Gastrocnemius medialis (tissue), 4 donors: ENCODE measurements at regions of chr3 and their contacts with region 1.

Region 1: DNA sequence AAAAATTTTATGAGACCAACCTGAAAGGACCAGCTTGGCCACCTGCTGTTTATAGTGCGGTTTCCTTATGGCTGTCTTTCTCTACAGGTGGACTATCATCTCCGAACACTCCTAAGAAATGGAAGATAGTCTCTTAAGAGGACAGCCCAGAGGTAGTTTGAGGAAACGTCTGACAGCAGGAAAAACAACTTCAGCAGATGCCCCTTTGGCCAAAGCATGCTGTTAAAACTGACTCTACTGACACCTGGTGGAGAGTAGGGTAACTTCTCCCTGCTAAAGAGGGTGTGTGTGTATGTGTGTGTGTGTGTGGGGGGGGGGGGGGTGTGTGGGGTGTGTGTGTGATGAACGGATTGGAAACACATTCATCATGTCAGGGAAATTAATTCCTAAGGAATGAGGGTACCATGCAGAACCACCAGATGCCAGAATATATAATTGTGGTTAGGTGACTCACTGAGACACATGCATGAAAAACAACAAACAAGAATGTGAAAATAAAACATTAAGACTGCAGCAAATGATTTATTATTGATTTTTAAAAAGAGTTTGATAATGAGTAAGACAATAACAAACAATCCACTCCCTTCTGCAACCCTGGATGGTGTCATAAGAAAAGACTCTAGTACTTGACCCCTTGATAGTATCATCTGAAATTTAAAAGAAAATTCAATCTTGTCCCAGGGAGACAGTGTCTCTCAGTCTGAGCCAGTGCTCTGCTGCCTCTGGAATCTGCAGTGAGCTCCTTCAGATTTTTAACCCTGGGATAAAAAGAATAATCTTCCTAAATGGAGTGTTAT is 256.5 kb downstream of the THRB start:
- DNase-seq: peak in 1 of 2 donors; percentile 36
- ATAC-seq: peak; percentile 57 to 72
- H3K4me3 ChIP-seq: no peak overlapping the region
- H3K27ac ChIP-seq: peak overlapping the region; percentile 30 to 62 (median 49)
- H3K4me1 ChIP-seq: peaks cover 40 to 54% of the 10 kb centered on the region in 2 donors
- H3K27me3 ChIP-seq: no peaks in the 10 kb centered on the region
- CTCF ChIP-seq: peak; percentile 73 to 81 (median 78)
- POLR2A ChIP-seq: no peak

Region 2: DNA sequence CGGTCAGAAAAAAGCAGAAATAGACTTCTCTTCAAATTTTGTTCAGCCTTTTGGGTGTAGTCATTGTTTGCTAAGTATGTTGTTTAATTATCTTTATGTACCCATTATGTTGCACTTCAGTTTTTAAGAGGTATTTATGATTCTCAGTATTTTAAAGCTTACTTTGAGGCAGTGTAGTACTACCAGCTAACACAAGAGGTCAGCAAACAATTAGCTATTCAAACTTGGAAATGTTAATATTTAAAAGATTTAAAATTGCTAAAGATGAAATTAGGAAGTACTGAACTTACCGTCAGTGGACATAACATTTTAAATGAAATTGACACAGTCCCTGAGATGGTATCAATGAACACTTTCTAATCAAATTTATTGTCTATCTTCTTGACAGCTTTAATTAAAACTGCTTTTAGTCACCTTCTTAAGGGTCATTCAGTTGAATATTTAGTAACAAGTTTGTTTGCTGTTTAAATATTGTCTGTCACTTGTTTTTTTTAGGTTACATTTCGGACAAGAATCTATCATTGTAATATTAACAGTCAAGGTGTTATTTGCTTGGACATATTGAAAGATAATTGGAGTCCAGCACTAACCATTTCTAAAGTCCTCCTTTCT is 349.4 kb before region 1 on chr3:
- in situ Hi-C with region 1: loop called in 2 of 4 experiments (anchors 25 kb)
- intact Hi-C with region 1: loop called (anchors 2 kb)
- DNase-seq: no peak
- ATAC-seq: no peak
- H3K4me3 ChIP-seq: no peak overlapping the region
- H3K27ac ChIP-seq: peak overlapping the region; percentile 22 to 62 (median 40)
- H3K4me1 ChIP-seq: peaks cover 27 to 32% of the 10 kb centered on the region in 2 donors
- H3K27me3 ChIP-seq: no peaks in the 10 kb centered on the region
- CTCF ChIP-seq: peak; percentile 68 to 93 (median 81)
- POLR2A ChIP-seq: no peak

Region 3: DNA sequence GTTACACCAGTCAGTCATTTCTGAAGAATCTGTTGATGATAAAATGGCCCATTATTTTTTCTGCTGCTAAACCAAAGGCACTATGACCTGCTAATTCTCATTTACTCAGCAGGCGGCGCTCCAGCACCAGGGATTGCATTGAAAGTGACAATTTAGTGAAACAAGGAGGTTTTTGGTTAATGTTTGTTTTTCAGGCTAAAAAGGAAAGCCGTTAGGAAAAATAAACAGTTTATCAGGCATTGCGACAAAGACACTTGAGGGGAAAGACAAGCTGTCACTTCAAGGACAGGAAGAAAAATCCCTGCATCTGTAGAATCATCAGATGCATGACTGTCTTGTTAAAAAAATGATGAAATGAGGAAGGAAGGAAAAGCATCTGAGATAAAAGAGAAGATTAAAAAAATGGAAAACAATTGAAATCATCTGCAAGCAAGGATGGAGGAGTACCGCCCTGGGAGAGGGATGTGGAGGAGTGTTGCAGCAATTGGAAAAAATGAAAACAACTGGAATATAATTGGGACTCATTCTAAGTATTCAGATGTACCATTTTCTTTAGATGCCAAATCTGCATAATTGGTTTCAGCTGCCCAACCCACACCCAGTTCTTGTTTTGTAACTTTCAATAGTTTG is 239.0 kb before region 1 on chr3:
- in situ Hi-C with region 1: loop called (anchors 10 kb)
- intact Hi-C with region 1: loop called (anchors 1 kb)
- DNase-seq: peak; percentile 23 to 37
- ATAC-seq: no peak
- H3K4me3 ChIP-seq: no peak overlapping the region
- H3K27ac ChIP-seq: no peak overlapping the region
- H3K4me1 ChIP-seq: peaks cover 0 to 9% of the 10 kb centered on the region in 2 donors
- H3K27me3 ChIP-seq: no peaks in the 10 kb centered on the region
- CTCF ChIP-seq: peak; percentile 82 to 97 (median 84)
- POLR2A ChIP-seq: no peak

Region 4: DNA sequence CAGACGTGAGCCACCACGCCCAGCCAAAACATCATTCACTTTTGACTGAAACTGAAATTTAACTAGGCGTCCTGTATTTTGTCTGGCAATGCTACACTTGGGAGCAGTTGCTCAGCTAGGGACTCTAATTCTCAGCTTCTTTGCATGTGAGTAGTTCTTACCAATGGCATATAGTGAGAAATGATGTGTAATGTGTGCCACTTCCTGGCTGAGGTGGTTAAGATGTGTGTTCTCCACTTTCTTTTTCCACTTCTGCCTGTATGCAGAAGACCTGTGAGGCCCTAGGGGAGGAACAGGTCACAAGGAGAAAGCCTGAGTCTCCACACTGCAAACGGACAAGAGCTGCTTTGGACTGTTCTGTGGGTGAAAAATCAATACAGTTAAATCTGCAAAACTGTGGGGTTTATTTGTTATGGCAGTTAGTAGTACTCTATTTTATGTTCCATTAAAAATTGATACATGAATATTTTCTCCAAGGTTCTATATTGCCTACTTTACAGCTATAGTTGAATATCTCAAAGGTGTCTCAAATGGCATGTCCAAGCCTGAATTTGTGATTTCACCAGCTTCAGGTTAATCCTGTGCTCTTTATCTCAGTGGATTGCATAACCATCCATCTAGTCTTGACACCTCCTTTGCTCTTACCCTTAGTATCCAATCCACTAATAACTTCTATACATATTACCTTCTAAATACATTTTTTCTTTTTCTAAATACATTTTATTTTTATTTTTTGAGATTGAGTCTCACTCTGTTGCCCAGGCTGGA is 233.8 kb before region 1 on chr3:
- in situ Hi-C with region 1: loop called (anchors 10 kb)
- intact Hi-C with region 1: loop called (anchors 1 kb)
- DNase-seq: no peak
- ATAC-seq: no peak
- H3K4me3 ChIP-seq: no peak overlapping the region
- H3K27ac ChIP-seq: no peak overlapping the region
- H3K4me1 ChIP-seq: peaks cover 0 to under 1% of the 10 kb centered on the region in 2 donors
- H3K27me3 ChIP-seq: no peaks in the 10 kb centered on the region
- CTCF ChIP-seq: no peak
- POLR2A ChIP-seq: no peak

Region 5: DNA sequence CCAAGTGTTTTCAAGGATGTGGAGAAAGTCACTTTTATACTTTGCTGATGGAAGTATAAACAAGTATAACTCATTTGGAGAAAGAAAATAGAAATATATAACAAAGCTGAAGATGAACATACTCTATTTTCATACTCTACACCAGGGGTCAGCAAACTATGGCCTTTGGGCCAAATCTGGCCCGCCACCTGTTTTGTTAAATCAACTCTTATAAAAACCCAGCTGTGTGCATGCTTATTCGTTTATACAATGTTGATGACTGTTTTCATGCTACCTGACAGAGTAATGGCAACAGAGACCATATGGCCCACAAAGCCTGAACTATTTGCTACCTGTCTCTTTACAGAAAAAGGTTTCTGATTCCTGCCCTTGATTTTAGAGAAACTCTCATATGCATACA is 169.1 kb before region 1 on chr3:
- in situ Hi-C with region 1: no loop called
- intact Hi-C with region 1: loop called (anchors 1 kb)
- DNase-seq: peak in 1 of 2 donors; percentile 23
- ATAC-seq: no peak
- H3K4me3 ChIP-seq: no peak overlapping the region
- H3K27ac ChIP-seq: no peak overlapping the region
- H3K4me1 ChIP-seq: peaks cover 4 to 6% of the 10 kb centered on the region in 2 donors
- H3K27me3 ChIP-seq: no peaks in the 10 kb centered on the region
- CTCF ChIP-seq: peak in 4 of 5 experiments; percentile 28 to 44 (median 34)
- POLR2A ChIP-seq: no peak

Region 6: GRCh38 chr3:24185738-24186384 is 52.3 kb before region 1 on chr3:
- in situ Hi-C with region 1: loop called in 1 of 4 experiments (anchors 10 kb)
- intact Hi-C with region 1: loop called (anchors 1 kb)
- DNase-seq: peak; percentile 9 to 31
- ATAC-seq: peak; percentile 66 to 80
- H3K4me3 ChIP-seq: no peak overlapping the region
- H3K27ac ChIP-seq: peak overlapping the region; percentile 47 to 65 (median 56)
- H3K4me1 ChIP-seq: peaks cover 15 to 25% of the 10 kb centered on the region in 2 donors
- H3K27me3 ChIP-seq: no peaks in the 10 kb centered on the region
- CTCF ChIP-seq: peak; percentile 54 to 78 (median 63)
- POLR2A ChIP-seq: no peak